Right cardiac atrium (tissue), 5 donors: ENCODE measurements at regions of chr15 and their contacts with region 1.

Region 1: DNA sequence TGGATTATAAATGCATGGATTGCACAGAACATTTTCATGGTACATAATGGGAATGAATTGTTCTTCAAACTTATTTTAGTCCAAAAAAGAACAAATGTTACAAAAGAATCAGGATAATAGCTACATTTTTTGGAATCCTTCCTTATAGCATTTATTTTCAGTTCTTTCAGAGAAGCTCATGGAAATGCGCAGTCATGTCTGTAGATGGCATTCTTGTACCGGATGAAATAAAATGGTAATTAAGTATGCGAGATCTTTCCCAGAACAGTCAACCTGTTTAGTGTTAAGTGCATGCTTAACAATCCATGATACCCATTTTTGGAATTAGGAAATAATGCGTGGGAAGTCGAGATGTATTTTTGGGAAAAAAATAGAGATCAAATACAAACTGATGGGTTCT is 38.2 kb upstream of the GOLGA8B start:
- DNase-seq: no peak
- ATAC-seq: no peak
- H3K4me3 ChIP-seq: no peak overlapping the region
- H3K27ac ChIP-seq: no peak overlapping the region
- H3K4me1 ChIP-seq: no peaks in the 10 kb centered on the region
- H3K27me3 ChIP-seq: no peaks in the 10 kb centered on the region

Region 2: GRCh38 chr15:34514251-34514670 is 107.4 kb before region 1 on chr15:
- intact Hi-C with region 1: no loop called
- DNase-seq: peak; percentile 24 to 83 (median 80)
- ATAC-seq: peak; percentile 93
- H3K4me3 ChIP-seq: peak overlapping the region; percentile 64
- H3K27ac ChIP-seq: peak overlapping the region; percentile 68
- H3K4me1 ChIP-seq: no peaks in the 10 kb centered on the region
- H3K27me3 ChIP-seq: no peaks in the 10 kb centered on the region

Region 3: GRCh38 chr15:34701536-34701935 is 79.9 kb after region 1 on chr15:
- intact Hi-C with region 1: no loop called
- DNase-seq: no peak
- ATAC-seq: no peak
- H3K4me3 ChIP-seq: no peak overlapping the region
- H3K27ac ChIP-seq: no peak overlapping the region
- H3K4me1 ChIP-seq: no peaks in the 10 kb centered on the region
- H3K27me3 ChIP-seq: no peaks in the 10 kb centered on the region

Region 4: GRCh38 chr15:34721802-34722795 is 100.4 kb after region 1 on chr15:
- intact Hi-C with region 1: no loop called
- DNase-seq: peak; percentile 79 to 90 (median 89)
- ATAC-seq: peak; percentile 94 to 95
- H3K4me3 ChIP-seq: peak overlapping the region; percentile 24
- H3K27ac ChIP-seq: peak overlapping the region; percentile 66
- H3K4me1 ChIP-seq: peaks cover 10% of the 10 kb centered on the region
- H3K27me3 ChIP-seq: no peaks in the 10 kb centered on the region

Region 5: DNA sequence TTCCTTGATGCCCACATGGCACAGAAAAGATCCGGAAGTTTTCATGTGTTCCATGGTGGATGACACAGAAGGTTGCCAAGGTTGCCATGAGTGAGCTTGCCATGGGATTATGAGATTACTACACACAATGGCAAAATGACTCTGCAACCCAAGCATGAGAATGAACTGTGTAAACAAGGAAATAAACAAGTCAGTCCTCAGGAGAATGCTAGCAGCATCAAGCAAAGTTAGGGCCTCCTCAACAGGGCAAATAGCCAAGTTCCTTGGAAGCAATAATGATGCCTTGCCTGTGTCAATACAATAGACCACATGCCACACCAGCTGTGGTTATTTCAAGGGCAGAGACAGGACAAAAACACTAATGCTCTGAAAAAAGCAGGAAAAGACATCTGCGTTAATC is 306.1 kb after region 1 on chr15:
- intact Hi-C with region 1: loop called in 3 of 4 experiments (anchors 5 to 10 kb)
- DNase-seq: no peak
- ATAC-seq: no peak
- H3K4me3 ChIP-seq: no peak overlapping the region
- H3K27ac ChIP-seq: no peak overlapping the region
- H3K4me1 ChIP-seq: no peaks in the 10 kb centered on the region
- H3K27me3 ChIP-seq: no peaks in the 10 kb centered on the region